Motor neuron (in vitro differentiated cells): ENCODE measurements at regions of chr22 and their contacts with region 1.

Region 1: GRCh38 chr22:41091132-41092022 is 1.0 kb upstream of the EP300 start:
- ATAC-seq: peak; percentile 87 to 94 (median 90)
- H3K4me3 ChIP-seq: peak overlapping the region; percentile 68 to 94 (median 82)
- H3K27ac ChIP-seq: peak overlapping the region; percentile 98 to 100
- H3K4me1 ChIP-seq: peaks cover 15 to 17% of the 10 kb centered on the region in 2 donors

Region 2: GRCh38 chr22:40928657-40929056 is 162.7 kb before region 1 on chr22:
- in situ Hi-C with region 1: loop called in 1 of 9 experiments (anchors 25 kb)
- ATAC-seq: no peak
- H3K4me3 ChIP-seq: no peak overlapping the region
- H3K27ac ChIP-seq: no peak overlapping the region
- H3K4me1 ChIP-seq: no peaks in the 10 kb centered on the region

Region 3: GRCh38 chr22:40950962-40951794 is 140.2 kb before region 1 on chr22 and contains the start of gene RBX1:
- in situ Hi-C with region 1: loop called in 4 of 9 experiments (anchors 10 to 25 kb)
- ATAC-seq: peak; percentile 84 to 90 (median 88)
- H3K4me3 ChIP-seq: peak within 1 kb of the TSS; percentile 65 to 88 (median 86)
- H3K27ac ChIP-seq: peak within 1 kb of the TSS; percentile 99
- H3K4me1 ChIP-seq: peaks cover 11% of the 10 kb centered on the region in 2 donors
- total RNA-seq, gene RBX1: 48.7 to 109 (median 67.6) TPM